Transverse colon (tissue), 4 donors: ENCODE measurements at regions of chr2 and their contacts with region 1.

Region 1: DNA sequence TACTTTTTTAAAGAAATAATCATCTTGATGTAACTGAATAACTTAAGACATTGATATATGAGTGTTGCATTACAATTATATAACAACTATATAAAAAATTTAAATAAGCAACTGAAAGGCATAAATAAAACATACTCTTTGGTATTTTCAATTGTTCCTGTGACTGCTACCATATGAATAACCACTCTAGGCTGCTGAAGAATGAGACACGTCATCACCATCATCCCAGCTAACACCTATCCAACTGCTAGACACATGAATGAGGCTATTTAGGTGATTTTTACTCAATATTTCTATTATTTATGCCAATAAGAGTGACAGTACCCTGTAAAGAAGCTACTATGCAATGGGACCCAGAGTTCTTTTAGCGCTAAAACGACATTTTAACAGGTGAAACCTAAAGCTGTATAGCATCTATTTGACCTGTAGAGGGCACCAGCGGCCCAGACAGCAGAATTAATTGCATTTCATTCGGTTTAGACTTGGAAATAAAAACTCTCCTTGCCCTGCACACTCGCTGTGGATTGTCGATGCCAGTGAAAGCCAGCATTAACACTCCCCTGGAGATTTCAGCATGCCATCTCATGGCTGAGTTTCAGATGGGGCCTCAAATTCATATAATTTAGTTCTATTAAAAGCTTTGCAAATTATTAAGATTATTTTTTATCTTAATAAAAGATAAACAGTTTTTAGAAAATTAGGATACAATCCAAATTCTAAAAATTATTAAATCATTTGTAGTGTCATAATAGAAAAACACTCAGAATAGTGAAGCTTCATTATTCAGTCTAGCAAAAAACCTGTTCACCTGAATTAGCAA is 89.4 kb upstream of the MAP2 start:
- DNase-seq: peak; percentile 16
- H3K4me3 ChIP-seq: no peak overlapping the region
- H3K27ac ChIP-seq: no peak overlapping the region
- H3K4me1 ChIP-seq: peaks cover 0 to 4% (median 0%) of the 10 kb centered on the region in 4 donors
- H3K27me3 ChIP-seq: no peaks in the 10 kb centered on the region
- CTCF ChIP-seq: peak; percentile 54 to 79 (median 75)
- EP300 ChIP-seq: no peak
- POLR2A ChIP-seq: no peak

Region 2: DNA sequence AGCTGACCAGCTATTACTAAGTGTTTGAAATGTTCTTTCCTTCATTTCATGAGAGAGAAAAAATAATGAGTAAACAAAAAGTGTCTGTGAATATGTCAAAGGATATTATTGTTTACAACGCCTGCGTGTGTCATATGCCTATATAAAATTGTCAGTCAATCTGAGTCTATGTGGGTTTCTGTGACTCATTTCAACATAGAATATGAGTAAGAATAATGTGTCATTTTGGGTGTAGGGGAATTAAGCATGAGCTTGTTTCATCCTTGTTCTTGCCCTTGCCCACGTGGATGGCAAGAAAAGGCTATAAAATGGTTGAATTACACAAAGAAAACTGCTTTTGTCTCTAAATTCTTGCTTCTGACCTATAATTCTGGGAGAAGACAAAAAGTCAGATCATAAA is 461.8 kb before region 1 on chr2:
- in situ Hi-C with region 1: no loop called
- intact Hi-C with region 1: no loop called
- DNase-seq: no peak
- H3K4me3 ChIP-seq: no peak overlapping the region
- H3K27ac ChIP-seq: no peak overlapping the region
- H3K4me1 ChIP-seq: no peaks in the 10 kb centered on the region
- H3K27me3 ChIP-seq: no peaks in the 10 kb centered on the region
- CTCF ChIP-seq: no peak
- EP300 ChIP-seq: no peak
- POLR2A ChIP-seq: no peak

Region 3: GRCh38 chr2:209269024-209269423 is 65.4 kb before region 1 on chr2:
- in situ Hi-C with region 1: no loop called
- intact Hi-C with region 1: no loop called
- DNase-seq: no peak
- H3K4me3 ChIP-seq: no peak overlapping the region
- H3K27ac ChIP-seq: no peak overlapping the region
- H3K4me1 ChIP-seq: no peaks in the 10 kb centered on the region
- H3K27me3 ChIP-seq: no peaks in the 10 kb centered on the region
- CTCF ChIP-seq: no peak
- EP300 ChIP-seq: no peak
- POLR2A ChIP-seq: no peak

Region 4: GRCh38 chr2:209577376-209578357 is 243.3 kb after region 1 on chr2:
- in situ Hi-C with region 1: loop called in 1 of 4 experiments (anchors 25 kb)
- intact Hi-C with region 1: no loop called
- DNase-seq: no peak
- H3K4me3 ChIP-seq: no peak overlapping the region
- H3K27ac ChIP-seq: no peak overlapping the region
- H3K4me1 ChIP-seq: peaks cover 0 to 4% (median 0%) of the 10 kb centered on the region in 4 donors
- H3K27me3 ChIP-seq: no peaks in the 10 kb centered on the region
- CTCF ChIP-seq: peak in 4 of 5 experiments; percentile 21 to 34 (median 29)
- EP300 ChIP-seq: no peak
- POLR2A ChIP-seq: no peak

Region 5: GRCh38 chr2:210224941-210225672 is 890.7 kb after region 1 on chr2 and contains the start of gene ACADL:
- in situ Hi-C with region 1: loop called in 2 of 4 experiments (anchors 25 kb)
- intact Hi-C with region 1: no loop called
- DNase-seq: peak; percentile 49
- H3K4me3 ChIP-seq: peak within 1 kb of the TSS; percentile 25 to 56 (median 32)
- H3K27ac ChIP-seq: no peak within 1 kb of the TSS
- H3K4me1 ChIP-seq: peaks cover 0 to 11% (median 10%) of the 10 kb centered on the region in 4 donors
- H3K27me3 ChIP-seq: peaks cover 75% of the 10 kb centered on the region
- CTCF ChIP-seq: no peak
- EP300 ChIP-seq: no peak
- POLR2A ChIP-seq: no peak
- total RNA-seq, gene ACADL: 0.41 to 1.5 (median 1.3) TPM in 3 of 4 donors, not detected in the other